ENCODE measurements at regions of chr19 and their contacts with region 1.

Region 1: DNA sequence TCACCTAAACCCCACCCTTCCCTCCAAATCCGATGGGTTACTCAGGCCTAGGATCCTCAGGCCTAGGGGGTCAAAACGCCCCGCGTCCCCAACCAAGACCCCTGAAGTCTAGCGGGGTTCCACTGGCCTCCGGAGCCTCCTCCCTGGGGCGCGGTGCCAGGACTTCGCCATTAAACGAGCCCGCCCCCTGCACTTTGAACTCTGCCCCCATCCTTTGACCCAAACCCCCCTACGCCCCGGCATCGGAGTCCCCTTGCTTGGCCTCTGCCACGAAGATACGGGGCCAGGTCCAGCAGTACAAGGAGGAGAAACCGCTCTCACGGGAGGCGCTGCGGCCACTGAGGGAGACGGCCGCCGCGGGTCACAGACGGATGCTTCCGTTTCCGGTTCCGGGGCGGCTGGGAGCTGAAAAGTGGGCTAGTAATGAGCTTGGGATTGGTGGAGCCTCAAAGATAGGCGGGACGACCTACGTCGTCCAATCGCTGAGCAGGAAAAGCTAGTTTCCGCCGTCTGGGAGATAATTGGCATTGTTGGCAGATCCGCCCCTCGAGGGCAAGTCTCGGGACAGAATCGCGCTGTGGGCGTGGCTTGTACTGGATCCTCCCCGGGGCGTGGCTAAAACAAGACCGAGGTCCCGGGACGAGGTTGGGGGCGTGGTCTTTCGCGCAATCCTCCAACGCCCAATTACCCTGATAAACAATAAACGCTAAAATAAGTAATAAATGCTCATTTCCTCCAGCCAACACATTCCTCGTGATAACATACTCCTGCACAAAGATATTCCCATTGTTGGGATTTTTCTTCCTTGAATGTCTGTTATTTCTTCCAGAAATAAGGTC is 5.7 kb upstream of the ZNF77 start:
- DNase-seq: peak; percentile 100
- H3K4me3 ChIP-seq: peak overlapping the region; percentile 57 to 66 (median 62)
- H3K27ac ChIP-seq: peak overlapping the region; percentile 89 to 97 (median 96)
- H3K4me1 ChIP-seq: peaks cover 4 to 26% (median 22%) of the 10 kb centered on the region in 4 donors
- H3K27me3 ChIP-seq: no peaks in the 10 kb centered on the region
- CTCF ChIP-seq: no peak
- EP300 ChIP-seq: no peak
- POLR2A ChIP-seq: peak; percentile 96

Region 2: DNA sequence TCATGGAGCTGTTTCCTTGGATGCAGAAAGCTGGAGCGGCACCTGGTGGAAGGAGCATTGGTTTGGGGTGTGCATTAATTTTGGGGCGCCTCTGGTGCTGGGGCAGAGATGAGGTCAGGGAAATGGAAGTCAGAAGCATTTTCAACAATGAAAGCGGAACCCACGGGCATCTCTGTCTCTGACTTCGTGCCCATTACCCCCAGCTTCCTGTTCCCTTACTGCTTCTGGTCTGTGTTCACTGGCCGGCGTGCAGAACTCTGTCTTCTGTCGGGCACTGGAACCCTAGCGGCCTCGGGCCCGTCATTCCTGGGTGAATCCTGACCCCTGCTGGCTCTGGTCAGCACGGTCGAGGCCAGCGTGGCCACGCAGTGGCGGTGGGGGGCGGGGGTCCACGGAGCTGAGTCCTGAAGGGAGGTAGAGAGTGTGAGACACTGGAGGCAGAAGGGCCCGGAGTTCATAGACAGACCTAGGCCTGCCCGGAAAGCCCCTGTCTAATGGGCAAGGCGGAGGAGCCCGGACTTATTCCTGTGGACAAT is 634.6 kb before region 1 on chr19:
- in situ Hi-C with region 1: no loop called
- intact Hi-C with region 1: no loop called
- DNase-seq: peak; percentile 71
- H3K4me3 ChIP-seq: no peak overlapping the region
- H3K27ac ChIP-seq: no peak overlapping the region
- H3K4me1 ChIP-seq: peaks cover 0 to 3% (median 0%) of the 10 kb centered on the region in 4 donors
- H3K27me3 ChIP-seq: peaks cover 38% of the 10 kb centered on the region
- CTCF ChIP-seq: peak; percentile 44 to 70 (median 51)
- EP300 ChIP-seq: no peak
- POLR2A ChIP-seq: no peak

Region 3: GRCh38 chr19:3062168-3063102 is 111.9 kb after region 1 on chr19 and contains the start of gene TLE5:
- in situ Hi-C with region 1: loop called in 1 of 4 experiments (anchors 10 kb)
- intact Hi-C with region 1: no loop called
- DNase-seq: peak; percentile 80
- H3K4me3 ChIP-seq: peak within 1 kb of the TSS; percentile 52 to 97 (median 92)
- H3K27ac ChIP-seq: peak within 1 kb of the TSS; percentile 95 to 99 (median 96)
- H3K4me1 ChIP-seq: peaks cover 20 to 60% (median 38%) of the 10 kb centered on the region in 4 donors
- H3K27me3 ChIP-seq: no peaks in the 10 kb centered on the region
- CTCF ChIP-seq: peak in 2 of 5 experiments; percentile 19 to 20
- EP300 ChIP-seq: no peak
- POLR2A ChIP-seq: peak; percentile 21
- total RNA-seq, gene TLE5: 307 to 561 (median 400) TPM

Region 4: GRCh38 chr19:3075895-3076431 is 125.5 kb after region 1 on chr19:
- in situ Hi-C with region 1: loop called in 2 of 4 experiments (anchors 10 to 25 kb)
- intact Hi-C with region 1: no loop called
- DNase-seq: peak; percentile 75
- H3K4me3 ChIP-seq: no peak overlapping the region
- H3K27ac ChIP-seq: no peak overlapping the region
- H3K4me1 ChIP-seq: peaks cover 0 to 21% (median 14%) of the 10 kb centered on the region in 4 donors
- H3K27me3 ChIP-seq: no peaks in the 10 kb centered on the region
- CTCF ChIP-seq: peak; percentile 97 to 98 (median 98)
- EP300 ChIP-seq: no peak
- POLR2A ChIP-seq: no peak

Region 5: DNA sequence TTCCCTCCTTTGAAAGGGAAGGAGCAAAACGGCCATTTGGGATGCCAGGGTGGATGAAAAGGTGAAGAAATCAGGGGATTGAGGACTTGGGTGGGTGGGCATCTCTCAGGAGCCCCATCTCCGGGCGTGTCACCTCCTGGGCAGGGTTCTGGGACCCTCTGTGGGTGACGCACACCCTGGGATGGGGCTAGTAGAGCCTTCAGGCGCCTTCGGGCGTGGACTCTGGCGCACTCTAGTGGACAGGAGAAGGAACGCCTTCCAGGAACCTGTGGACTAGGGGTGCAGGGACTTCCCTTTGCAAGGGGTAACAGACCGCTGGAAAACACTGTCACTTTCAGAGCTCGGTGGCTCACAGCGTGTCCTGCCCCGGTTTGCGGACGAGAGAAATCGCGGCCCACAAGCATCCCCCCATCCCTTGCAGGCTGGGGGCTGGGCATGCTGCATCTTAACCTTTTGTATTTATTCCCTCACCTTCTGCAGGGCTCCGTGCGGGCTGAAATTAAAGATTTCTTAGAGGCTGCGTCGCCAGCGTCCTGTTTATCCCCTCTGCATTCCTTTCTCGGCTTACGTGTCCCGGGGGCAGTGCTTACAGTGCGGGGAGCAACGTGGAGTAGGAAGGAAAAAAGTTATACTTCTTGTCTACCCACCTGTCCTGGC is 212.9 kb after region 1 on chr19:
- in situ Hi-C with region 1: loop called in 1 of 4 experiments (anchors 10 kb)
- intact Hi-C with region 1: no loop called
- DNase-seq: peak; percentile 56
- H3K4me3 ChIP-seq: no peak overlapping the region
- H3K27ac ChIP-seq: no peak overlapping the region
- H3K4me1 ChIP-seq: peaks cover 0 to 6% (median 0%) of the 10 kb centered on the region in 4 donors
- H3K27me3 ChIP-seq: no peaks in the 10 kb centered on the region
- CTCF ChIP-seq: peak; percentile 82 to 96 (median 94)
- EP300 ChIP-seq: no peak
- POLR2A ChIP-seq: no peak

Region 6: GRCh38 chr19:3270902-3271301 is 320.4 kb after region 1 on chr19:
- in situ Hi-C with region 1: no loop called
- intact Hi-C with region 1: no loop called
- DNase-seq: no peak
- H3K4me3 ChIP-seq: no peak overlapping the region
- H3K27ac ChIP-seq: no peak overlapping the region
- H3K4me1 ChIP-seq: peaks cover 0 to 10% (median 7%) of the 10 kb centered on the region in 4 donors
- H3K27me3 ChIP-seq: peaks cover 84% of the 10 kb centered on the region
- CTCF ChIP-seq: no peak
- EP300 ChIP-seq: no peak
- POLR2A ChIP-seq: no peak